H1 (cell line): ENCODE measurements at regions of chr10 and their contacts with region 1.

Region 1: DNA sequence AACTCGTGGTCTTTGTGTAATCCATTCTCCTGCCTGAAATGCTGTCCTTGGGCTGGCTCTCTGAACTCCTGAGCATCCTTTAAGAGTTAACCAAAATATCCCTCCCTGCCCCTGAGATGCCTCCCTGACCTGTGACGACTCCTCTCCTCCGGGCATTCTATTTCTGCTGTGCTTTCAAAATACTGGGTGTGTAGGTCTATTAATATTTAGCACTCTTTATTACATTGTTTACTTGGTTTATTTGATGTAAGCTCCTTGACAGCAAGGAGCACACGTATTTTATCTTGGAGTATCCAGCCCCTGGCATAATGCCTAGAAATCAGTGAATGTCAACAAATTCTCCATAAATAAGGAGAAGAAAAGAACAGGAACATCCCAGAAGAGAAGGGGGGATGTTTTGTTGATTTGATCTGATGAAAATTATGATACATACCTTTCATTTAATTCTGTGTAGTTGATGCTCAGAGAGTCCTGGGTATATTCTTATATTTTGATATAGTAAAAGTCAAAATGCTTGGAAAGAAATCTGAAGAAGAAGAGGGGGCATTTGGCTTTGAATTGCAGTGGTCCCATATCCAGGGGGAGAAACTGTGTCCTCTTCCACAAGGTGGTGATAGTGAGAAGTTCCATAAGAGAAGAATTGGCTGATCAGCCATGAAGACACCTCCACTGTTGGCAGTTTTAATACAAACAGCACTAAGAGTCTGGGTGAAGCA is 107.7 kb upstream of the MPP7 start:
- DNase-seq: no peak
- H3K4me3 ChIP-seq: no peak overlapping the region
- H3K27ac ChIP-seq: no peak overlapping the region
- H3K4me1 ChIP-seq: no peaks in the 10 kb centered on the region
- H3K27me3 ChIP-seq: no peaks in the 10 kb centered on the region
- CTCF ChIP-seq: peak in 2 of 3 experiments; percentile 34 to 43; a peak in 3 of 4 replicates
- EP300 ChIP-seq: no peak
- POLR2A ChIP-seq: no peak
- RAD21 ChIP-seq: peak; percentile 23 to 49; a peak in 3 of 4 replicates

Region 2: GRCh38 chr10:28367929-28368484 is 42.6 kb before region 1 on chr10:
- CTCF ChIA-PET with region 1: no interaction called
- POLR2A ChIA-PET with region 1: no interaction called
- DNase-seq: no peak
- H3K4me3 ChIP-seq: no peak overlapping the region
- H3K27ac ChIP-seq: no peak overlapping the region
- H3K4me1 ChIP-seq: peaks cover 0 to 5% (median under 1%) of the 10 kb centered on the region in 4 experiments; a peak in 1 of 7 replicates
- H3K27me3 ChIP-seq: no peaks in the 10 kb centered on the region
- CTCF ChIP-seq: no peak
- EP300 ChIP-seq: no peak
- POLR2A ChIP-seq: no peak
- RAD21 ChIP-seq: no peak

Region 3: GRCh38 chr10:28432210-28432676 is 21.7 kb after region 1 on chr10:
- CTCF ChIA-PET with region 1: interaction called, 13 read pairs
- POLR2A ChIA-PET with region 1: interaction called, 3 read pairs
- DNase-seq: peak; percentile 39 to 51
- H3K4me3 ChIP-seq: no peak overlapping the region
- H3K27ac ChIP-seq: no peak overlapping the region
- H3K4me1 ChIP-seq: no peaks in the 10 kb centered on the region
- H3K27me3 ChIP-seq: no peaks in the 10 kb centered on the region
- CTCF ChIP-seq: peak; percentile 34 to 79 (median 71)
- EP300 ChIP-seq: no peak
- POLR2A ChIP-seq: no peak
- RAD21 ChIP-seq: peak; percentile 85 to 87